ENCODE measurements at regions of chr4 and their contacts with region 1.

Region 1: GRCh38 chr4:140018931-140019618 is 134.9 kb downstream of the MAML3 start:
- DNase-seq: peak; percentile 6
- ATAC-seq: peak; percentile 79
- H3K4me3 ChIP-seq: peak overlapping the region in 2 of 3 experiments; percentile 13 to 38; a peak in 1 of 6 replicates
- H3K27ac ChIP-seq: peak overlapping the region; percentile 48
- H3K4me1 ChIP-seq: peaks cover 33% of the 10 kb centered on the region
- H3K27me3 ChIP-seq: no peaks in the 10 kb centered on the region
- CTCF ChIP-seq: no peak
- EP300 ChIP-seq: no peak
- POLR2A ChIP-seq: no peak
- RAD21 ChIP-seq: no peak

Region 2: DNA sequence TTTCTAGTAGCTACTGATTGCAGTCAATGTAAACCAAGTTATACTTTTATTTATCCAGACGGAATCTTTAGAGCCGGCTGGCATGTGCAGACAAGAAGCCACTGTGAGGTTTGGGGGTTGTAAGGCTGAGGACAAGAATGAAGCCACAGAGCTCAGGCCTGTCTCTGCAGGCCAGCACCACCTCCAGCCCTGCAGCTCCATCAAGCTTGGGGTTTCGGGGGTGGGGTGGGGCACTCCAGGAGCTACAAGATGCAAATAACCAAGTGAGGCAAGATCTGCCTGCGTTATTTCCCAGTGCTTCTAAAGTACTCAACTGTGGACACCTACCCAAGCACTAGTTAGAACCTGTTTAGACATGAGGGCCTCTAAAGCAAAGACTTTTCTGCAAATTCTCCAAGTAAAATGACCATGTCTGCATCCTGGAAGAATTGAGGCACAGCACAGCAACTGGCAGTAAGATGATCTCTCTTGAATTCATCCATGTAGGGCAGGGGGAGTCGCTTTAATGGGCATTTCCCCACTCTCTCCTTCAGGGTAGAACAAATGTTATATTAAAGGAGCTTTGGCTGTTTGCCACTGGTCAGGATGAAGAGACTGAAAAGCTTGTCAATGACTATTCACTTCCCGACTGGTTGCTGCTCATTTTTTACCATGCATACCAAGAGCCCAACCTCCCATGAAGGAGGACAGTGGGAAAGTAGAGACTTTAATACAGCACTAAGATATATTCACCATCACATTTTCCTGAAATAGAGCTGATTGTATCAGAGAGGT is 130.9 kb before region 1 on chr4:
- CTCF ChIA-PET with region 1: no interaction called
- POLR2A ChIA-PET with region 1: no interaction called
- in situ Hi-C with region 1: no loop called
- intact Hi-C with region 1: no loop called
- DNase-seq: no peak
- ATAC-seq: no peak
- H3K4me3 ChIP-seq: no peak overlapping the region
- H3K27ac ChIP-seq: no peak overlapping the region
- H3K4me1 ChIP-seq: peaks cover 39% of the 10 kb centered on the region
- H3K27me3 ChIP-seq: peaks cover 0 to 13% of the 10 kb centered on the region in 2 experiments; a peak in 2 of 5 replicates
- CTCF ChIP-seq: no peak
- EP300 ChIP-seq: no peak
- POLR2A ChIP-seq: no peak
- RAD21 ChIP-seq: no peak

Region 3: DNA sequence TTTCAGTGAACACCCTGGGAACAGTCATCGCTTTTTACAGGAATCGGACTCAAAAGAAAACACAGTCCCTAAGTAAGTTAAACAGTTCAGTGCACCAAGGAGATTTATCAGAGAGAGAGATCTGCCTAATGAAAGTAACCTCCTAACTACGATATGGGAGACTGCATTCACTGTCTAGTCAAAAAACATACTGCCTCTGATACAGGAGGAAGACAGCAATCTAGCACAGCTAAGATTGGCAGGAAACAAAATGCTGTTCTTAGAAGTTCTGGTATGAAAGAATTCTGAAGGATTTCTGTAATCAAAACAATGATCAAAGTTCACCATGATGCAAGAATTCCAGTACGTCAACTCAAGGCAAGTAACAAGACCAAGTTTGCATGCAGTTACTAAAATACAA is 42.1 kb after region 1 on chr4:
- CTCF ChIA-PET with region 1: no interaction called
- POLR2A ChIA-PET with region 1: no interaction called
- in situ Hi-C with region 1: no loop called
- intact Hi-C with region 1: loop called (anchors 1 kb)
- DNase-seq: peak; percentile 29
- ATAC-seq: no peak
- H3K4me3 ChIP-seq: no peak overlapping the region
- H3K27ac ChIP-seq: no peak overlapping the region
- H3K4me1 ChIP-seq: peaks cover 10% of the 10 kb centered on the region
- H3K27me3 ChIP-seq: no peaks in the 10 kb centered on the region; a peak in 1 of 5 replicates
- CTCF ChIP-seq: no peak
- EP300 ChIP-seq: no peak
- POLR2A ChIP-seq: no peak
- RAD21 ChIP-seq: no peak

Region 4: GRCh38 chr4:140095694-140096482 is 76.8 kb after region 1 on chr4:
- CTCF ChIA-PET with region 1: no interaction called
- POLR2A ChIA-PET with region 1: no interaction called
- in situ Hi-C with region 1: no loop called
- intact Hi-C with region 1: no loop called
- DNase-seq: no peak
- ATAC-seq: no peak
- H3K4me3 ChIP-seq: no peak overlapping the region
- H3K27ac ChIP-seq: no peak overlapping the region
- H3K4me1 ChIP-seq: no peaks in the 10 kb centered on the region
- H3K27me3 ChIP-seq: no peaks in the 10 kb centered on the region
- CTCF ChIP-seq: no peak
- EP300 ChIP-seq: no peak
- POLR2A ChIP-seq: no peak
- RAD21 ChIP-seq: no peak